HCT116 (cell line): ENCODE measurements at regions of chr5 and their contacts with region 1.

Region 1: GRCh38 chr5:74201334-74202081 is 439.0 kb downstream of the ENC1 start:
- DNase-seq: no peak
- ATAC-seq: peak; percentile 44; the same call in 1 of the 2 replicates
- H3K4me3 ChIP-seq: no peak overlapping the region
- H3K27ac ChIP-seq: no peak overlapping the region
- H3K4me1 ChIP-seq: peaks cover 2 to 10% of the 10 kb centered on the region in 2 experiments; a peak in 2 of 4 replicates
- H3K27me3 ChIP-seq: no peaks in the 10 kb centered on the region
- CTCF ChIP-seq: no peak
- POLR2A ChIP-seq: no peak
- RAD21 ChIP-seq: no peak

Region 2: DNA sequence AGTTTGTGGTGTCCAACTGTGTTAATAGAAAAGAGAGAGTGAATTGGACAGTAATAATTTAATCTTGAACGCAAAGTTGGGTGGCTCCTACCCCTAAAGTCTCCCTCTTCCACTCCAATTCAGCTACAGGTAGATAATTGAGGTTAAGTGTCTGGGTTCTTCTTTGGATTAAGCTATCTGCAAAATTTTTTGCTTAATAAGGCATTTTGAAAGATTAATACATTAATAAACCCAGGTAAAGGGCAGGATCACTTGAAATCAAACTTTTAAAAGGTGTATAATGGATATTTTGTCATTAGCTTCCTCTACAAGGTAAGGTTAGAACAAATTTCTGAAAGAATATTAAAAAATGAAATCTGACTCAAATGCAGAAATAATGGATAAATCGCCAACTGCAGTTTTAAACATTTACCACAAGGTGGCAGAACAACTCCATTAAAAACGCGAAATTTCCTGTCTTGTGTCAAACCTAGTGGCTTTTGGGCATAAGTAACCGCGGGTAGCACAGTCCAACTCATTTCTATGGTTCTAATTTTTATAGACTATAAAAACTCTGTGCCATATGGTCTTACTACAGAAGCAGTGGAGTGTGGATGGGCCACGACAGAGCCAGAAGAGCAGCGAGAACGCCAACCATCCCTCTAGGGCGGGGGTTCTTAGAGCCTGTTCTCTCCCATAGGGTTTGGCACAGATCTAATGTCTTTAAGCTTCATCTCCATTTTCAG is 299.0 kb before region 1 on chr5:
- CTCF ChIA-PET with region 1: no interaction called
- POLR2A ChIA-PET with region 1: no interaction called
- RAD21 ChIA-PET with region 1: no interaction called
- intact Hi-C with region 1: no loop called
- DNase-seq: peak; percentile 63
- ATAC-seq: peak; percentile 36; the same call in 1 of the 2 replicates
- H3K4me3 ChIP-seq: no peak overlapping the region
- H3K27ac ChIP-seq: no peak overlapping the region
- H3K4me1 ChIP-seq: peaks cover 18% of the 10 kb centered on the region in 2 experiments; a peak in 3 of 4 replicates
- H3K27me3 ChIP-seq: no peaks in the 10 kb centered on the region
- CTCF ChIP-seq: peak; percentile 46 to 87 (median 64); a peak in 5 of 6 replicates
- POLR2A ChIP-seq: no peak
- RAD21 ChIP-seq: peak; percentile 89

Region 3: DNA sequence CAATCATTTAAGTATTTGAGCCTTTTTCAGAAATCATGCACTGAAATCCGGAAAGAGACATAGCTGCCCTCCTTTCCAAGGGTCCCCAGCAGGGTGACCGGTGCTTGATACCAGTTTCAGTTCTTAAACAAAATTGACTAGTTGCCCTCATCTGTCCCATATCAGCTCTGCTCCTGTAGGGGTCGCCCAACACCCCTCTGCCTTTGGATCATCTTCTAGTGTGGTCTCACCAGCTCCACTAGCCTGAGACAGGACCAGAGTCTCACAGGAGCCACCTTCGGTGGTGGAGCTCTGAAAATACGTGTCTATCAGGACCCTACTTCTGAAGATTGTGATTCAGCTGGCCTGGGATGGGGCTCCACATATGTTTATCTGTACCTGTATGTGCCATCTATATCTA is 10.8 kb after region 1 on chr5:
- CTCF ChIA-PET with region 1: interaction called, 10 read pairs
- POLR2A ChIA-PET with region 1: no interaction called
- RAD21 ChIA-PET with region 1: no interaction called
- intact Hi-C with region 1: no loop called
- DNase-seq: peak; percentile 26
- ATAC-seq: peak; percentile 91
- H3K4me3 ChIP-seq: no peak overlapping the region
- H3K27ac ChIP-seq: no peak overlapping the region
- H3K4me1 ChIP-seq: no peaks in the 10 kb centered on the region
- H3K27me3 ChIP-seq: no peaks in the 10 kb centered on the region
- CTCF ChIP-seq: peak; percentile 24 to 59 (median 54); a peak in 5 of 6 replicates
- POLR2A ChIP-seq: no peak
- RAD21 ChIP-seq: peak; percentile 59

Region 4: DNA sequence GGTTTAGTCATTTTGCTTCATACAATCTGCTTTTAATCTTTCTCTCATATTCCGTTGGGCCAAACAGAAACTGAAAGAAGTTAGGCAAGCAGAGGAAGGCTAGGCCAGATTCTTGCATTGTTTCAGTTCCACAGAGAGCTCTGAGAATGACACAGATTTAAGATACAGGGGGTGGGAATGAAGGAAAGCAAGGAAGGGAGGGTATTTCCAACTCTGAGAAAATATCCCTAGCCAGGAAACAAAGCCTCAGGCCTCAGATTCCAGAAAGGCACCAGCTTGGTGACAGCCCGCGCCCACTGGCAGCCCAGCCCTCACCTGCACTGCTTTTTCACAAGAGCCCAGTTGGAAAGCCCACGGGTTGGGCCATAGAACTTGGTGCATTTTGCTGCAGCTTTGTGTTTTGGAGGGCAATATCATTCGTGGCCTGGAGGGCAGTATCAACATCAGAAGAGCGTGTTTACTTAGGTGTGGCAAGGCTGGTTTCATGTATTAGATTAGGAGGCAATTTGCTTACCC is 375.5 kb after region 1 on chr5:
- CTCF ChIA-PET with region 1: no interaction called
- POLR2A ChIA-PET with region 1: no interaction called
- RAD21 ChIA-PET with region 1: no interaction called
- intact Hi-C with region 1: no loop called
- DNase-seq: no peak
- ATAC-seq: no peak
- H3K4me3 ChIP-seq: no peak overlapping the region
- H3K27ac ChIP-seq: no peak overlapping the region
- H3K4me1 ChIP-seq: peaks cover 18 to 21% of the 10 kb centered on the region in 2 experiments
- H3K27me3 ChIP-seq: no peaks in the 10 kb centered on the region
- CTCF ChIP-seq: no peak
- POLR2A ChIP-seq: no peak
- RAD21 ChIP-seq: no peak